ENCODE measurements at regions of chr1 and their contacts with region 1.

Region 1: DNA sequence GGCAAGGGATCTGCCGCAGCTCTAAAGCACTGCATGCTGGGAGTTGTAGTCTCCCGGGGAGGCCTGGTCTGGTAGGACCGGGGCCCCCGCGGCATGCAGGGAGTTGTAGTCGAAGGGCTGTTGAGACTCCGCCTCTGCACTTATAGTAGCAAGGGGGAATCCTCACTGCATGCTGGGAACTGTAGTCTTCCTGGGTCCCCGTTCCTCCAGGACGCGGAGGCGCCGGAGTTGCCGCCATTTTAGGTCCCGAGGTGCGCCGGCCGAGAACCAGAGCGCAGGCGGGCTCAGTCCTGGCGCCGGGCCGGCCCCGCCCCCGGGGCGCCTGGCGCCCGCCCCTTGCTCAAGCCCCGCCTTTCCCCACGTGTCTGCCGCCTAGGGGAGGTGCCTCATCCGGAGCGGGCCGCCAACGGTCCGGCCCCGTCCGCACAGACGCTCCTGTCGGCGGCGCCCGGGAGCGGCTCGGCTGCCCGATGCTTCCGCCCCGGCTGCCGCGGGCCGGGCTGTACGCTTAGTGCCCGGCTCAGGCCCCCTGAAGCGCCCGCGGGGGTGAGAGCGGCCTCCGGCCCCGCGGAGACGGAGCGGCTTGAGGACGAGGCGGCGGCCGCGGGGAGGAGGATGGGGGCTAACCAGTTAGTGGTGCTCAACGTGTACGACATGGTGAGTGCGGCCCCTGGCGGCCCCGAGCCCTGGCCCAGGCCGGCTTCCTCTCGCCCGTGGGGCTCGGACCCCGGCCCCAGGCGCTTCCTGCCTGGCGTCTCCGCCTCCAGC is at the start of gene DESI2:
- DNase-seq: peak; percentile 95 to 100 (median 98)
- ATAC-seq: peak; percentile 95
- H3K4me3 ChIP-seq: peak within 1 kb of the TSS; percentile 75
- H3K4me3 Mint-ChIP-seq: peak within 1 kb of the TSS in 9 of 10 donors; percentile 83 to 91 (median 88)
- H3K27ac ChIP-seq: peak within 1 kb of the TSS; percentile 87
- H3K27ac Mint-ChIP-seq: peak within 1 kb of the TSS; percentile 81 to 96 (median 90)
- H3K4me1 ChIP-seq: peaks cover 19 to 24% of the 10 kb centered on the region in 2 donors
- H3K4me1 Mint-ChIP-seq: peaks cover 19 to 33% (median 21%) of the 10 kb centered on the region in 7 donors
- H3K27me3 ChIP-seq: no peaks in the 10 kb centered on the region
- H3K27me3 Mint-ChIP-seq: no peaks in the 10 kb centered on the region
- total RNA-seq, gene DESI2: 13.0 to 23.4 (median 17.6) TPM

Region 2: DNA sequence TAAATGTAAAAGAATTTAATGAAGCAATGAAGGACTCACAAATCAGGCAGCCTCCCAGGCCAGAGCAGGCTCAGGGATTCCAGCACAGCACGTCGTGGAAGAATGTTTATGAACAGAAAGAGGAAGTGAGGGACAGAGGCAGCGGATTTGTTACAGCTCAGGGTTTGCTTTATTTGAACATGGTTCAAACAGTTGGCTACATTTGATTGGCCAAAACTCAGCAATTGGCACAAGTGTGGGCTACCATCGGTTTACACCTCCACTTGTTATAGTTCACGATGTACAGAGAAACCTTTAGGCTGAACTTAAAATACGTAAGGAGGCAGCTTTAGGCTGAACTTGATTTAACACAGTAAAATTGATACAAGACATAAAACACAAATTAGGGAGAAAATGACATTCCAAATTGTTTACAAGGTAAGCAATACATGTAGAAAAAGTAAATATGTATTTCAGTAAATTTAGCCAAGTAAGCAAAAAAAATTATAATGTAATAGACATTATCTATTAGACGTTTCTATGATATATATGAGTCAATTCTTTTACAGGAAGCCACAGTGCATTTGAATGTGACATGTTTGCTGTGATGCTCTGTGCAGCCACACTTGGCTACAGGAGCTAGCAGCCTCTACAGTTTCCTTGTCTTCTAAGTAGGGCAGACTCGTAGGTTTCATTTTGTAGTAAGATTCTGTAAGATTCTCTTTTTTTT is 327.7 kb before region 1 on chr1:
- CTCF ChIA-PET with region 1: no interaction called
- POLR2A ChIA-PET with region 1: no interaction called
- intact Hi-C with region 1: loop called in 1 of 2 experiments (anchors 2 kb)
- DNase-seq: peak in 2 of 9 donors; percentile 5 to 11
- ATAC-seq: peak; percentile 76
- H3K4me3 ChIP-seq: no peak overlapping the region
- H3K4me3 Mint-ChIP-seq: peak overlapping the region in 6 of 10 donors; percentile 4 to 82 (median 70)
- H3K27ac ChIP-seq: no peak overlapping the region
- H3K27ac Mint-ChIP-seq: peak overlapping the region in 6 of 9 donors; percentile 4 to 92 (median 37)
- H3K4me1 ChIP-seq: peaks cover 0 to 28% of the 10 kb centered on the region in 2 donors
- H3K4me1 Mint-ChIP-seq: peaks cover 0 to 51% (median 0%) of the 10 kb centered on the region in 7 donors
- H3K27me3 ChIP-seq: no peaks in the 10 kb centered on the region
- H3K27me3 Mint-ChIP-seq: peaks cover 0 to 6% (median 4%) of the 10 kb centered on the region in 5 donors

Region 3: DNA sequence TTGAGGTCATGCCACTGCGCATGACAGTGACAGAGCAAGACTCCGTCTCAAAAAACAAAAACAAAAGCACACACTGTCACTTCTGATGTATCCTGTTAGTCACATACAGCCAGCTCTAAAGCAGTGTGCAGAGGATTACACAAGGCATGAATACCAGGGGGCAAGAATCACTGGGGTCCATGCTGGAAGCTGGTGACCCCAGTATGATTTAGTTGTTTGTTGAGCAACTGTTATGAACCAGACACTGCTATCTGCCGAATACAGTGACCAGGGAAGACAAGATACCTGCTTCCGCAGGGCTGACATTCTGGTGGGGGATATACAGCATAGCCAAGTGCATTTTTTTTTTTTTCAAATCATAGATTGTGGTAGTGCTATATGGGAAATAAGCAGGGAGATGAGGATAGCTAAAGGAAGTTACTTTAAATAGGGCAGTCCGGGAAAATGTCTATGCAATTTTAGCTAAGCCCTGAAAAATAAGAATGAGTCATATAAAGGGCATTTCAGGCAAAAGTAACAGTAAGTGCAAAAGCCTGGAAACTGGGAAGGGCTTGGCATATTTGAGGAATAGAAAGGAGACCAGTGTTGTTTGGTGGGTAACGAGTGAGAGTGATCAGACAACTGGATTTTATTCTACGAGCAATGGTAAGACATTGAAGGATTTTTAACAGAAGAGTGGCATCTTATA is 270.9 kb before region 1 on chr1:
- CTCF ChIA-PET with region 1: no interaction called
- POLR2A ChIA-PET with region 1: no interaction called
- intact Hi-C with region 1: no loop called
- DNase-seq: no peak
- ATAC-seq: no peak
- H3K4me3 ChIP-seq: no peak overlapping the region
- H3K4me3 Mint-ChIP-seq: no peak overlapping the region
- H3K27ac ChIP-seq: no peak overlapping the region
- H3K27ac Mint-ChIP-seq: no peak overlapping the region
- H3K4me1 ChIP-seq: no peaks in the 10 kb centered on the region
- H3K4me1 Mint-ChIP-seq: no peaks in the 10 kb centered on the region
- H3K27me3 ChIP-seq: no peaks in the 10 kb centered on the region
- H3K27me3 Mint-ChIP-seq: no peaks in the 10 kb centered on the region

Region 4: DNA sequence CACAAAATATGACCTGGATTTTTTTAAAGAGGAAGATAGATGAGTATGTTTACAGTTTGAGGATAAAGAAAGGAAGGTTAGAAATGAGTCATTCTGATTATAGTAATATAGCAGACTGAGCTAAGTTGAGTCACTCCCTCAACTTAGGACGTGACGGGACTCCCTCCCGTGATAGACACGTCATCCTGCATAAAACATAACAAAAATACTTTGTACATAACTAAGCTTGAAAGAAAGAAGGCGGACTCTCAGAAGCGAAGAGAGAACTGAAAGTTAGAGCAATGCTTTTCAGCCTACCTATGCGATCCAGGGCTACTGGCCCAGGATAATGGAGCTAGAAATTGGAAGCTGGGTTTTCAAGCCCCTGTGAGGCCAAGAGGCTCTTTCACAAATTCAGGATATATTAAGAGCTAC is 52.9 kb before region 1 on chr1:
- CTCF ChIA-PET with region 1: interaction called, 7 read pairs
- POLR2A ChIA-PET with region 1: no interaction called
- intact Hi-C with region 1: loop called (anchors 1 kb)
- DNase-seq: peak in 5 of 9 donors; percentile 7 to 47 (median 14)
- ATAC-seq: peak; percentile 86
- H3K4me3 ChIP-seq: no peak overlapping the region
- H3K4me3 Mint-ChIP-seq: peak overlapping the region in 3 of 10 donors; percentile 30 to 67 (median 64)
- H3K27ac ChIP-seq: no peak overlapping the region
- H3K27ac Mint-ChIP-seq: peak overlapping the region in 5 of 9 donors; percentile 57 to 90 (median 89)
- H3K4me1 ChIP-seq: no peaks in the 10 kb centered on the region
- H3K4me1 Mint-ChIP-seq: peaks cover 0 to 16% (median 0%) of the 10 kb centered on the region in 7 donors
- H3K27me3 ChIP-seq: no peaks in the 10 kb centered on the region
- H3K27me3 Mint-ChIP-seq: peaks cover 0 to 7% (median 0%) of the 10 kb centered on the region in 5 donors

Region 5: GRCh38 chr1:244835276-244836134 is 182.6 kb after region 1 on chr1 and contains the start of gene COX20:
- CTCF ChIA-PET with region 1: no interaction called
- POLR2A ChIA-PET with region 1: interaction called, 43 read pairs
- intact Hi-C with region 1: loop called (anchors 1 kb)
- DNase-seq: peak; percentile 84 to 97 (median 93)
- ATAC-seq: peak; percentile 84
- H3K4me3 ChIP-seq: peak within 1 kb of the TSS; percentile 87
- H3K4me3 Mint-ChIP-seq: peak within 1 kb of the TSS; percentile 85 to 100 (median 97)
- H3K27ac ChIP-seq: peak within 1 kb of the TSS; percentile 96
- H3K27ac Mint-ChIP-seq: peak within 1 kb of the TSS; percentile 99 to 100 (median 100)
- H3K4me1 ChIP-seq: peaks cover 17 to 27% of the 10 kb centered on the region in 2 donors
- H3K4me1 Mint-ChIP-seq: peaks cover 34 to 55% (median 48%) of the 10 kb centered on the region in 7 donors
- H3K27me3 ChIP-seq: no peaks in the 10 kb centered on the region
- H3K27me3 Mint-ChIP-seq: no peaks in the 10 kb centered on the region
- total RNA-seq, gene COX20: 23.5 to 31.0 (median 27.8) TPM

Region 6: DNA sequence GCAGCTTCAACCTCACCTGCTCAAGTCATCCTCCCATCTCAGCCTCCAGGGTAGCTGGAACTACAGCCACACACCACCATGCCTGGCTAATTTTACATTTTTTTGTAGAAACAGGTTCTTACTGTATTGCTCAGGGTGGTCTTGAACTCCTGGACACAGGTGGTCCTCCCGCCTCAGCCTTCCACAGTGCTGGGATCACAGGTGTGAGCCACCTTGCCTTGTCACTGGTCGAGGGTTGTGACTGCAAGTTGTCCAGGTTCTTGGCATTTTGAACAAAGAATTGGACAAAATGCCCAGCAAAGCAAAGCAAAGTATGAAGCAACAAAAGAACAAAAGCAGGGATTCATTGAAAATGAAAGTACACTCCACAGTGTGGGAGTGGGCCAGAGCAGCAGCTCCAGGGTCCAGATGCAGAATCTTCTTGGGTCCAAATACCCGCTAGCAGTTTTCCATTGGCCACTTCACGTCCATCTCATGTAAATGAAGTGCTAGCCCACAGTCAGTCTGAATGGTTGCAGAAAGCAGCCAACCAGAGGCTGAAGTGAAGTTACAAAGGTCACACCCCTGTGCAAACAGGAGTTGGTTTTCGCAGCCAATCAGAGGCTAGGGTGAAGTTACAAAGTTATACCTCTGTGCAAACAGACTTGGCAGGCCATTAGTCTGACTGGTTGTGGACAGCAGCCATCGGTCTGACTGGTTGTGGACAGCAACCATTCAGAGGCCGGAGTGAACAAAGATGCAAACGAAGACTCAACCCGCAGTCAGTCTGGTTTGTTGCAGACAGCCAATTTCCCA is 392.4 kb after region 1 on chr1:
- CTCF ChIA-PET with region 1: no interaction called
- POLR2A ChIA-PET with region 1: interaction called, 3 read pairs
- intact Hi-C with region 1: loop called (anchors 1 kb)
- DNase-seq: no peak
- ATAC-seq: no peak
- H3K4me3 ChIP-seq: no peak overlapping the region
- H3K4me3 Mint-ChIP-seq: no peak overlapping the region
- H3K27ac ChIP-seq: no peak overlapping the region
- H3K27ac Mint-ChIP-seq: no peak overlapping the region
- H3K4me1 ChIP-seq: no peaks in the 10 kb centered on the region
- H3K4me1 Mint-ChIP-seq: peaks cover 0 to 6% (median 0%) of the 10 kb centered on the region in 7 donors
- H3K27me3 ChIP-seq: no peaks in the 10 kb centered on the region
- H3K27me3 Mint-ChIP-seq: peaks cover 0 to 2% (median 0%) of the 10 kb centered on the region in 5 donors

Region 7: GRCh38 chr1:246506674-246507481 is 1854.0 kb after region 1 on chr1 and contains the start of gene SMYD3:
- CTCF ChIA-PET with region 1: no interaction called
- POLR2A ChIA-PET with region 1: no interaction called
- intact Hi-C with region 1: loop called in 1 of 2 experiments (anchors 10 kb)
- DNase-seq: peak; percentile 70 to 81 (median 75)
- ATAC-seq: peak; percentile 93
- H3K4me3 ChIP-seq: peak within 1 kb of the TSS; percentile 78
- H3K4me3 Mint-ChIP-seq: peak within 1 kb of the TSS; percentile 88 to 96 (median 93)
- H3K27ac ChIP-seq: peak within 1 kb of the TSS; percentile 75
- H3K27ac Mint-ChIP-seq: peak within 1 kb of the TSS; percentile 78 to 95 (median 91)
- H3K4me1 ChIP-seq: peaks cover 4 to 6% of the 10 kb centered on the region in 2 donors
- H3K4me1 Mint-ChIP-seq: peaks cover 19 to 41% (median 30%) of the 10 kb centered on the region in 7 donors
- H3K27me3 ChIP-seq: no peaks in the 10 kb centered on the region
- H3K27me3 Mint-ChIP-seq: no peaks in the 10 kb centered on the region
- total RNA-seq, gene SMYD3: 19.5 to 28.6 (median 24.2) TPM

Measured in naive thymus-derived CD4-positive, alpha-beta T cell (primary cell).